Endothelial cell of umbilical vein (primary cell): ENCODE measurements at regions of chr2 and their contacts with region 1.

Region 1: DNA sequence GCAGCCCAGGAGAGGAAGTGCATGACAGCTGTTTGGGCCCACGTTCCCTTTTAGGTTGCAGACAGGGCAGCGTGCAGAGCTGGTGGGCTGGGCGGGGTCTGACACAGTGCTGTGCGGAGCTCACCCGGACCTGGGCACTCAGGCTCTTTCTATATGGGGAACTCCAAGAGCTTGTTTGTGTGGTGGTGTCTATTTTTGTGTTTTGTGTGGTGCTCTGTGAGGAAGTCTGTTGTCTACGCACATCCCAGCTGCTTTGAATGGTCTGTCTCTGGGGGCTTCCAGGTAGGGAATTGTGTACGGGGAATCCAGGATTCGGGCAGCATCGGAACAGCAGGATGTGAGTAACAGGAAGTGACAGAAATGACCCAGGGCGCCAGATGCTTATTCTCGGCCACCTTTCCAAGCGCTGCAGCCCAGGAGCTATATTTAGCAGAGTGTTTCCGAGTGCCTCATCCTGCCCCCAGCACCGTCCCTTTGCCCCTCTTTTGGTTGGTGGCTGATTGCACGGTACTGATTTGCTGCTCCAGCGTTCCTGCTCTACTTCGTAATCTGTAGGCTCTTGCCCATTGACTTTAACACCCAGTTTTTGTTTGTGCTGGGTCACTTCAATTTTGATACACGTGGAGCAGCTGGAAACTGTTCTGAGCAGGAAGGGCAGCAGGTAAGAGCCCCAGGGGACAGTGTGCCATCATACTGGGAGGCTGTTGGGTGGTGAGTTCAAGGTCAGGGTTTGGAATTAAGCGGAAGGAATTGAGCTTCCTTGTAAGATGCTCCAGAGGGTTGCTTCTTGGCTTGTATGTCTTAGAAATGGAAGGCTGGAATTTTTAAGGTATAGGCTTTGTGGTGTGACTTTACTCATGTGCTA is 64.7 kb downstream of the DGKD start:
- DNase-seq: peak; percentile 87
- H3K4me3 ChIP-seq: peak overlapping the region in 1 of 3 experiments; percentile 33
- H3K27ac ChIP-seq: peak overlapping the region; percentile 89
- H3K4me1 ChIP-seq: peaks cover 41% of the 10 kb centered on the region
- H3K27me3 ChIP-seq: no peaks in the 10 kb centered on the region
- CTCF ChIP-seq: no peak
- POLR2A ChIP-seq: no peak

Region 2: DNA sequence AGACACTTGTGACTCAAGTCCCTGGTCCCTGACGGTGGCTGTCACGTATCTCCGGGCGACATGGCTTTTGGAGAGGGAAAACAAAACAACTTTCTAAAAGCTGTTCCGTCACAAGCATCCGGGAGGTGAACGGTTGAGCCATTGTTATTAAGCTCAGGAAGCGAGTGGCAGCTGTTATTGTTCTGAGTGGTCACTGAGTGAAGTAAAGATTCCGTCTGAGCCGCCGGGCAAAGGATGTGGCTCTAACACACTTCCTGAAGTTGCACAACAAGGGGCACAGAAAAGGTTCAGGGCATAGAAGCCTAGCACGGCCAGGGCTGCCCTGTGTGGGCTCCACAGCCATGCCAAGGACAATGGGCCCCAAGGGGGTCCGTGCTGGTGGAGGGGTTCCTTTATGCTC is 334.5 kb before region 1 on chr2:
- CTCF ChIA-PET with region 1: no interaction called
- POLR2A ChIA-PET with region 1: no interaction called
- dilution Hi-C with region 1: no loop called
- intact Hi-C with region 1: loop called (anchors 10 kb)
- DNase-seq: peak; percentile 96
- H3K4me3 ChIP-seq: peak overlapping the region in 1 of 3 experiments; percentile 3
- H3K27ac ChIP-seq: peak overlapping the region; percentile 94
- H3K4me1 ChIP-seq: peaks cover 40% of the 10 kb centered on the region
- H3K27me3 ChIP-seq: no peaks in the 10 kb centered on the region
- CTCF ChIP-seq: no peak
- POLR2A ChIP-seq: peak; percentile 42

Region 3: DNA sequence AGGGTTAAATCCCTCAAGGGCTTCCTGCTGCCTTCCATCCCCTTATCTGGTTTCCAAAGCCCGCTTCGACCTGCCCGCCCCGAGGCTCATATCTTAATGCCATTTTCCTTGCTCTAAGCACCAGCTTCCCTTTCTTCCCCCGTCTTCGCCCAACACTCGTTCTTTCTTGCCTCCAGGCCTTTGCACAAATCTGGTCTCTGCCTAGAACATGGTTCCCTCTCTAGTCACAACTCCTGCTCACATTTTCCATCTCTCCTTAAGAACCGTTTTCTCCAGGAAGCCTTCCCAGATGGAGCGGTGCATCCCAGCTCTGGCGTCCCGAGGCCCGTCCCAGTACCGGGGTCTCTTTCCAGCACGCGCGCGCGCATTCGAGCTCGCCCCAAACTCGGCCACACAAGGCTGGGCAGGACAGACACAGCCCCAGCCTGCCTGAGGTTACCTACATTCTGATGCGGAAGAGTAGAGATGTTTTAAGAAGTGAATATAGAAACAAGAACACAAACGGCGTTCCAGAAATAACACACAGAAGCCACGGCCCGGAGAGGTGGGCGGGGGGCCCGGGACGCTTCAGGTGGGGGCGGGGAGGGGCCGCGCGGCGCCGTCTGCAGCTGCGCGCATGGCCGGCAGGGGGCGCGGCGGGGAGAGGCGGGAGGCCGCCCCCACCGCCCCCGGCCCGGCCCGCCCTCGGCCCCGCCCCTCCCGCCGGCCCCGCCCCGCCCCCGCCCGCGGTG is 65.1 kb before region 1 on chr2 and contains the start of gene DGKD:
- CTCF ChIA-PET with region 1: no interaction called
- POLR2A ChIA-PET with region 1: no interaction called
- dilution Hi-C with region 1: no loop called
- intact Hi-C with region 1: no loop called
- DNase-seq: peak; percentile 56
- H3K4me3 ChIP-seq: peak within 1 kb of the TSS; percentile 40 to 78 (median 59)
- H3K27ac ChIP-seq: peak within 1 kb of the TSS; percentile 19
- H3K4me1 ChIP-seq: peaks cover 23% of the 10 kb centered on the region
- H3K27me3 ChIP-seq: no peaks in the 10 kb centered on the region
- CTCF ChIP-seq: peak in 1 of 2 donors; percentile 26
- POLR2A ChIP-seq: no peak
- total RNA-seq, gene DGKD: 36.5 and 36.6 TPM in 2 replicates

Region 4: DNA sequence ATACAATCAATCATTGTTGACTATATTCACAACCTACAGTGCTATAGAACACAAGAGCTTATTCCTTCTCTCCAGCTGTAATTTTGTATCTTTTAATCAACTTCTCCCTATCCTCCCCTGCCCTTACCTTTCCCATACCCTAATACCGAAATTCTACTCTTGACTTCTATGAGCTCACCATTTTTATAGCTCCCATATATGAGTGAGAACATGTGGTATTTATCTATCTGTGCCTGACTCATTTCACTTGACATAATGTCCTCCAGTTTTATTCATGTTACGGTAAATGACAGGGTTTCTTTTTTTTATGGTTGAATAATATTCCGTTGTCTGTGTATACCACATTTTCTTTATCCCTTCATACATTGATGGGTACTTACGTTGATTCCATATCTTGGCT is 361.8 kb after region 1 on chr2:
- CTCF ChIA-PET with region 1: no interaction called
- POLR2A ChIA-PET with region 1: no interaction called
- dilution Hi-C with region 1: no loop called
- intact Hi-C with region 1: no loop called
- DNase-seq: no peak
- H3K4me3 ChIP-seq: no peak overlapping the region
- H3K27ac ChIP-seq: no peak overlapping the region
- H3K4me1 ChIP-seq: no peaks in the 10 kb centered on the region
- H3K27me3 ChIP-seq: no peaks in the 10 kb centered on the region
- CTCF ChIP-seq: no peak
- POLR2A ChIP-seq: no peak